AG04450 (cell line): ENCODE measurements at regions of chr13 and their contacts with region 1.

Region 1: GRCh38 chr13:30880856-30881155 is 25.3 kb upstream of the MEDAG start:
- DNase-seq: peak; percentile 81
- H3K4me3 ChIP-seq: no peak overlapping the region
- H3K27ac ChIP-seq: peak overlapping the region; percentile 72
- H3K27me3 ChIP-seq: no peaks in the 10 kb centered on the region
- CTCF ChIP-seq: no peak

Region 2: DNA sequence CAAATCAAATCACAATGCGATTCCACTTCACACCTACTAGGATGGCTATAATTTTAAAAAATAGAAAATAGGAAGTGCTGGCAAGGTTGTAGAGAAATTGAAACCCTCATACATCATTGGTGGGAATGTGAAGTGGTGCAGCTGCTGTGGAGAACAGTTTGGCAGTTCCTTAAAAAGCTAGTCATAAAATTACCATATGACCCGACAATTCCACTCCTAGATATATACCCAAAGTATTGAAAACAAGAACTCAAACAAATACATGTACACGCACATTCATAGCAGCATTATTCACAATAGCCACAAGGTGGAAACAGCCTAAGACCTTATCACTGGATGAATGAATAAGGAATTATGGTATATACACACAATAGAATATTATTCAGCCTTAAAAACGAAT is 427.1 kb before region 1 on chr13:
- CTCF ChIA-PET with region 1: no interaction called
- POLR2A ChIA-PET with region 1: no interaction called
- DNase-seq: no peak
- H3K4me3 ChIP-seq: no peak overlapping the region
- H3K27ac ChIP-seq: no peak overlapping the region
- H3K27me3 ChIP-seq: no peaks in the 10 kb centered on the region
- CTCF ChIP-seq: peak; percentile 31

Region 3: DNA sequence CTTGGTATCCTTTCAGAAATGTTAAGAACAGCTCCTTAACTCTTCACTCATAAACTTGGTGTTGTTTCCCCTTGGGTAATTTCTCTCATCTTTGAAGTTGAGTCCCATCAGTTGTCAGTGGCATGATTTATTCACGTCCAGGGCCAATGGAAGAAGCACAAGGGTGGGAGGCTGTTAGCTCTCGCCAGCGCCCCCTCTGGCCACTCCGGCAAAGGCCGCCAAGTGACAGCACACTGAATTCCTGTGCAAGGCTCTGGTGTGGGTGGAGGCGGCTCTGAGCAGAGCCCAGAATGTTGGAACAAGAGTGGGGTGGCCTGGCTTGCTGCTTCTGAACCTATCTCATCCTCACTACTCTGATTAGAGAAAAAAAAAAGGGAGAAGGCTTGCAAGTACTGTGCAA is 12.2 kb after region 1 on chr13:
- CTCF ChIA-PET with region 1: interaction called, 12 read pairs
- POLR2A ChIA-PET with region 1: interaction called, 5 read pairs
- DNase-seq: no peak
- H3K4me3 ChIP-seq: no peak overlapping the region
- H3K27ac ChIP-seq: no peak overlapping the region
- H3K27me3 ChIP-seq: no peaks in the 10 kb centered on the region
- CTCF ChIP-seq: peak; percentile 60

Region 4: GRCh38 chr13:31267126-31267784 is 386.4 kb after region 1 on chr13:
- CTCF ChIA-PET with region 1: no interaction called
- POLR2A ChIA-PET with region 1: no interaction called
- DNase-seq: no peak
- H3K4me3 ChIP-seq: no peak overlapping the region
- H3K27ac ChIP-seq: no peak overlapping the region
- H3K27me3 ChIP-seq: no peaks in the 10 kb centered on the region
- CTCF ChIP-seq: no peak